CD4-positive, alpha-beta T cell (primary cell): ENCODE measurements at regions of chr6 and their contacts with region 1.

Region 1: DNA sequence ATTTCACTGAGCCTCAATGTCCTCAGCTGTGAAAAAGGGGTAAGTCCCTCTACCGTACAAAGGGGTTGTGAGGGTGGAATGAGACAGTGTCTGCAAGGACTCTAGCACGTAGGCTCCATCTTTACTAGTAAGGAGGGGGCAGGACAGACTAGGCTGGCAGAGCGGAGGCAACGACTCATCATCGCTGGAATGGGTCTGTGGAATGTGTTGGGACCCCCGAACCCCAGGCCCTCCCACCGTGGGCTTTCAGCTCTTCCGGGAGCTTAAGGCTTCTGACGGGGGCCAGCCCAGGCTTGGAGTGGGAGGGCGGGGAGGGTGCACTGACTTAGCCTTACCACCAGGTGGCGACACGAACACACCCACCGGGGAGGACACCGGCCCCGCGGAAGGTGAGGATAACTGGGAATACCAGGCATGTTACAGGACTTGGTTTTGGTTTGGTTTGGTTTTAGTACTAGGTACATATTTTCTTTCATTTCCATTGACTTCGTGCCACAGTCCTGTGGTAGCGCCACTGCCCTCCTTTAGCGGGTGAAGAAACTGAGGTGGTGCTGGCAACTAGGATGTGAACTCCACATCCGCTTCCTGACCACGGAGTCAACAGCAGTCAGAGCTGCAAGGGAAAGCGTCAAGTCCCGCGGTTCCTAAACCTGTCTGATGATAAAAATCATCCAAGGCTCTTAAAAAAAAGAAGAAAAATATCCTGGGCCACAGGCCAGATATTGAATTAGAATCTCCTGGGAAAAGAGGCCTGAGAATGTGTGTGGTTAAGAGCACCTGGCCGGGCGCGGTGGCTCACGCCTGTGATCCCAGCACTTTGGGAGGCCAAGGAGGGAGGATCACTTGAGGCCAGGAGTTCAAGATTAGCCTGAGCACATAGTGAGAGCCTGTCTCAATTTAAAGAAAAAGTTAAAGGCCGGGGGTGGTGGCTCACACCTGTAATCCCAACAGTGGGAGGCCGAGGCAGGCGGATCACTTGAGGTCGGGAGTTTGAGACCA is 10.3 kb upstream of the TULP1 start:
- DNase-seq: peak; percentile 61 to 91 (median 66)
- ATAC-seq: peak; percentile 88
- H3K4me3 ChIP-seq: peak overlapping the region; percentile 35
- H3K4me3 Mint-ChIP-seq: peak overlapping the region; percentile 79
- H3K27ac ChIP-seq: no peak overlapping the region
- H3K27ac Mint-ChIP-seq: peak overlapping the region; percentile 82
- H3K4me1 ChIP-seq: peaks cover 31% of the 10 kb centered on the region
- H3K4me1 Mint-ChIP-seq: peaks cover 14% of the 10 kb centered on the region
- H3K27me3 ChIP-seq: no peaks in the 10 kb centered on the region
- H3K27me3 Mint-ChIP-seq: no peaks in the 10 kb centered on the region
- CTCF ChIP-seq: peak; percentile 98

Region 2: DNA sequence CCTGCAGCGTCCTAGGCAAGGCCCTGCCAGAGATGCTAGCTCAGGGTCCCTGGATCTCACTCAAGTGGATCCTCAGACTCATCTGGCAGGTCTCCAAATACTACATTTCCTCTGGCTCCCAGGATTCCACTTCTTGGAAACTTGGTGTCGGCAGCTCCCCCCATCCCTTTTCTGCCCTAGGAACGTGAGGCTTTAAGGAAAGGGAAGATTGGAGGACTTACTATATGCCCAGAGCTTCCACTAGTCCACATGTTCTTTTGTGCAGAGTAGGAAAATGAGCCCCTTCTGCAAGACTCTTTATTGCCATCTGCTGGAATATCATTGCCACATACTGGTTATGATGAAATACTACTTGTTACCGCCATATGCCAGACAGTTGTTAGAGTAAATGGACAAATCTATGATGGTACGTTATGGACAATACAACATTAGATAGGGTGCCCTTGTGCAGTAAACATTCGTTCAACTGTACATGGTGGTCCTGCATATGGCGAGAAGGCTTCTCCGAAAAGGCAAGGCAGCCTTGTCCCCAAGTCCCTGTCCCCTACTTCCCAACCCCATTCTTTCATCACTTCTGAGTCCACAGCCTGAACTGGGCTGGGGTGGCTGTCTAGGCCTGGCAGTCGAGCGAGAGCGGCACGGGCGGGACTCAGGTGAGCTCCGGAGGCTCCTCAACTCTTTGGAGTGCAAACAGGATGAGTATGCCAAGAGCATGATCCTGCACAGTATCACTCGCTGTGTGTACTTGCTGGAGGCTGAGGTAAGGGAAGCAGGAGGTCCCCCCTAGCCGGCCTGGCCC is 214.7 kb after region 1 on chr6:
- CTCF ChIA-PET with region 1: interaction called, 13 read pairs
- POLR2A ChIA-PET with region 1: interaction called, 3 read pairs
- intact Hi-C with region 1: loop called (anchors 1 kb)
- DNase-seq: peak in 3 of 14 experiments; percentile 82 to 84 (median 83)
- ATAC-seq: peak; percentile 77
- H3K4me3 ChIP-seq: no peak overlapping the region
- H3K4me3 Mint-ChIP-seq: peak overlapping the region; percentile 81
- H3K27ac ChIP-seq: no peak overlapping the region
- H3K27ac Mint-ChIP-seq: peak overlapping the region; percentile 78
- H3K4me1 ChIP-seq: peaks cover 54% of the 10 kb centered on the region
- H3K4me1 Mint-ChIP-seq: peaks cover 46% of the 10 kb centered on the region
- H3K27me3 ChIP-seq: no peaks in the 10 kb centered on the region
- H3K27me3 Mint-ChIP-seq: no peaks in the 10 kb centered on the region
- CTCF ChIP-seq: peak; percentile 78

Region 3: GRCh38 chr6:36160147-36160760 is 637.3 kb after region 1 on chr6:
- CTCF ChIA-PET with region 1: no interaction called
- POLR2A ChIA-PET with region 1: no interaction called
- intact Hi-C with region 1: no loop called
- DNase-seq: no peak
- ATAC-seq: no peak
- H3K4me3 ChIP-seq: no peak overlapping the region
- H3K4me3 Mint-ChIP-seq: no peak overlapping the region
- H3K27ac ChIP-seq: no peak overlapping the region
- H3K27ac Mint-ChIP-seq: no peak overlapping the region
- H3K4me1 ChIP-seq: no peaks in the 10 kb centered on the region
- H3K4me1 Mint-ChIP-seq: no peaks in the 10 kb centered on the region
- H3K27me3 ChIP-seq: no peaks in the 10 kb centered on the region
- H3K27me3 Mint-ChIP-seq: no peaks in the 10 kb centered on the region
- CTCF ChIP-seq: no peak